ENCODE measurements at regions of chr17 and their contacts with region 1.

Region 1: DNA sequence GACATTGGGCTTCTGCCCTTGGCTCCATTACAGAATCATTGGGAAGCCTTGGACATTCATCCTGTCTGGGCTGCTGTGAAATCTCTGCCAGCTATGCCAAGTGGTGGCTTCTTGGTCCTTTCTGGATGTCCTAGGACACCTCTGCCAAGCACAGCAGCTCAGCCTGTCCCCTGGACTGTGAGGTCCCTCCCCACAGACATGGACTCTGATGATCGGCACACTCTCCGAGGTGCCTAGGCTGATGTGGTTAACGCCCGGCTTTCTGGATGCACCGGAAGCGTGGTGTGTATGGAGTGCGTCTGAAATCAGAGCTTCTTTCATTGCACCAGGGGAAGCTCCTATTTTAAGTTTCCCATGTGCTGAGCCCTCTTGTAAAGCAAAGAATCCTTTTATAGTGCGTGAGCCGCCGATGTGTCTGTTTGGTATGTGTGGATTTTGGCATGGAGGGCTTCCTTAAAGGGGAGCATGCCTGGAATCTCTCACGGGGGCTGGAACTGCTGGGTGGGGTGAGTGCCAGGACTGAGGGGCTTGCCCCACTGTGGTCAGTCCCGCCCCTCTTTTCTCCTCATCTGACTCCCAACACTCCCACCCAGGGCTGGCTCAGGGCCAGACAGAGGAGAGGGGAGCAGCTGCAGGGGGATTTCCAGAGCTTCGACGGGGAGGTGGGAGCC is 7.0 kb upstream of the ARHGAP23 start:
- DNase-seq: no peak
- H3K4me3 ChIP-seq: no peak overlapping the region
- H3K27ac ChIP-seq: peak overlapping the region; percentile 59 to 79 (median 73)
- H3K4me1 ChIP-seq: peaks cover 6 to 46% (median 21%) of the 10 kb centered on the region in 4 donors
- H3K27me3 ChIP-seq: peaks cover 63% of the 10 kb centered on the region
- CTCF ChIP-seq: no peak
- EP300 ChIP-seq: no peak
- POLR2A ChIP-seq: no peak

Region 2: DNA sequence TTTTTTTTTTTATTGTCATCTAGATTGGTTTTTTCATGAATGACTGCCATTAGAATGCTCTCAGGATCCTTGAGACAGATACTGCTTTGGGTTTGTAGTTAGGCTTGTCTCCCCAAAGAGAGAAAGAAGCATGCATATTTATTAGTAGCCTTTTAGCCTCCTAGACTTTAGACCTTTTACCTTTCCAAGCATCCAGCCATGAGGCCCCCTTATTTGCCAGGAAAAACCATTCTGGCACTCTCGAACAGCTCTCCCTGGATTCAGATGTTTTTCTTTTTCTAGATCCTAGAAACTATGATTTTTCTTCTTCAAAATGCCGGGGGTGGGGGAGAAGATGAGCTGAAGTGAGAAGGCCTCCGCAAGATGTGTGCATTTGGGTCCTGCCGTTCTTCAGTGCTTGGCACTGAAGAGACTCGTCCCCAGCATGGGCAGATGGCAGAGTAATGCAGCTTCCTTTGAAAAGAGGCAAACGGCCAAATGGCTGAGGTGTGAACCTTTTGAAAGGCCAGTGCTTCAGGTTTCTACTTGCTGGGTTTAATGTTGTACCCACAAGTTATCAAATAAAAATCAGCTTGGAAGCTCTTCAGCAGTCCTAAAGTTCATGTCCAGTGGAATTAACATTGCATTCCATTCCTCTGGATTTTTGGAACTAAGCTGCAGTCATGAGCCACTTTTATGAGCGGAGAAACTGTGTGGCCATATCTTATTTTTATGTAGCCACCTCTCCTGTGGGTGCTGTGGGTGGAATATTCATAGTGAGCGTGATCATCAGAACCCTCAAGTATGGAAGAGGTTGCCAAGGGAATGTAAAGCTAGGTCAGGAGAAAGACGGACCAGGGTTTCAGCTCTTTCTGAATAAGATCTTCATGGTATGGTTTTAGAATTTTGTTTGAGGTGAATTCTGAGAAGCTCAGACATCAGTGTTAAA is 62.5 kb before region 1 on chr17:
- in situ Hi-C with region 1: no loop called
- intact Hi-C with region 1: no loop called
- DNase-seq: no peak
- H3K4me3 ChIP-seq: no peak overlapping the region
- H3K27ac ChIP-seq: peak overlapping the region in 3 of 4 donors; percentile 66 to 93 (median 67)
- H3K4me1 ChIP-seq: peaks cover 8 to 62% (median 26%) of the 10 kb centered on the region in 4 donors
- H3K27me3 ChIP-seq: no peaks in the 10 kb centered on the region
- CTCF ChIP-seq: no peak
- EP300 ChIP-seq: no peak
- POLR2A ChIP-seq: no peak

Region 3: DNA sequence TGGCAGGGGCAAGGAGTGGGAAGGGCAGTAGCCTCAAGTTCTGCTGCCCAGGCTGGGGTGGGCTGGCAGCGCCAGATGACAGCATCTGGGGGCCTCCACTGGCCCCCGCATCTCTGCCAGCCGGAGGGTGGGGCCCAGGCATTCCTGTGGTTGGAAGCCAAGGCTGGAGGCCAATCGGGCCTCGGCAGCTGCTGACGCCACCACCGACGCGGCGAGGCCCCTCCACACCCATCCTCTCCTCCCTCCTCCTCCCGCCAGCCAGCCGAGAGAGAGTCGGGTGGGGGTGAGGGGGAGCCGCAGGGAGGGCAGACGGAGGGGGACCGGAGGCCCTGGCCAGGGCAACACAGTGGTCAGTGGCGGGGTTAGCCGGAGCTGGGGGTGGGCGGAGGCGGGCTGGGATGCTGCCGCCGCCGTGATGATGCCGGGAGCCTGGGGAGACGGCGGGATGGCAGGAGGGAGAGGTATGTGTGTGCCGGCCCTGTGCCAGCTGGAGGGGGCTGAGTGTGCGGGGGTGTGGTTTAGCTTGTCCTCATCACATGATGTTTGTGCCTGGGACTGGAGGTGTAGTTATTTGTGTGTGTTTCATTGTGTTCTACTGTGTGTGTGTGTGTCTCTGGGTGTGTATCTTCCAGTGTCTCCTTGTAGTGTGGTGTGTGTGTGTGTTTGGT is 43.6 kb after region 1 on chr17:
- in situ Hi-C with region 1: no loop called
- intact Hi-C with region 1: loop called (anchors 5 kb)
- DNase-seq: peak; percentile 73
- H3K4me3 ChIP-seq: peak overlapping the region; percentile 21 to 55 (median 38)
- H3K27ac ChIP-seq: peak overlapping the region; percentile 88 to 93 (median 90)
- H3K4me1 ChIP-seq: peaks cover 5 to 31% (median 25%) of the 10 kb centered on the region in 4 donors
- H3K27me3 ChIP-seq: no peaks in the 10 kb centered on the region
- CTCF ChIP-seq: no peak
- EP300 ChIP-seq: no peak
- POLR2A ChIP-seq: no peak